Activated CD8-positive, alpha-beta T cell treated with anti-CD3 and anti-CD28 coated beads for 36 hours (primary cell): ENCODE measurements at regions of chr1 and their contacts with region 1.

Region 1: GRCh38 chr1:3796215-3797061 is at the start of gene LRRC47:
- DNase-seq: peak; percentile 96
- ATAC-seq: peak; percentile 99
- H3K4me3 Mint-ChIP-seq: peak within 1 kb of the TSS; percentile 82
- H3K27ac Mint-ChIP-seq: peak within 1 kb of the TSS; percentile 95
- H3K4me1 Mint-ChIP-seq: peaks cover 43% of the 10 kb centered on the region
- H3K27me3 Mint-ChIP-seq: peaks cover 6% of the 10 kb centered on the region
- CTCF ChIP-seq: no peak
- total RNA-seq, gene LRRC47: 32.6 to 33.1 TPM

Region 2: GRCh38 chr1:3384407-3384806 is 412.0 kb before region 1 on chr1:
- CTCF ChIA-PET with region 1: no interaction called
- POLR2A ChIA-PET with region 1: no interaction called
- intact Hi-C with region 1: no loop called
- DNase-seq: no peak
- ATAC-seq: no peak
- H3K4me3 Mint-ChIP-seq: no peak overlapping the region
- H3K27ac Mint-ChIP-seq: no peak overlapping the region
- H3K4me1 Mint-ChIP-seq: no peaks in the 10 kb centered on the region
- H3K27me3 Mint-ChIP-seq: peaks cover 1% of the 10 kb centered on the region
- CTCF ChIP-seq: no peak

Region 3: GRCh38 chr1:3762151-3762872 is 34.1 kb before region 1 on chr1:
- CTCF ChIA-PET with region 1: no interaction called
- POLR2A ChIA-PET with region 1: no interaction called
- intact Hi-C with region 1: no loop called
- DNase-seq: no peak
- ATAC-seq: no peak
- H3K4me3 Mint-ChIP-seq: no peak overlapping the region
- H3K27ac Mint-ChIP-seq: no peak overlapping the region
- H3K4me1 Mint-ChIP-seq: no peaks in the 10 kb centered on the region
- H3K27me3 Mint-ChIP-seq: peaks cover 16% of the 10 kb centered on the region
- CTCF ChIP-seq: no peak

Region 4: DNA sequence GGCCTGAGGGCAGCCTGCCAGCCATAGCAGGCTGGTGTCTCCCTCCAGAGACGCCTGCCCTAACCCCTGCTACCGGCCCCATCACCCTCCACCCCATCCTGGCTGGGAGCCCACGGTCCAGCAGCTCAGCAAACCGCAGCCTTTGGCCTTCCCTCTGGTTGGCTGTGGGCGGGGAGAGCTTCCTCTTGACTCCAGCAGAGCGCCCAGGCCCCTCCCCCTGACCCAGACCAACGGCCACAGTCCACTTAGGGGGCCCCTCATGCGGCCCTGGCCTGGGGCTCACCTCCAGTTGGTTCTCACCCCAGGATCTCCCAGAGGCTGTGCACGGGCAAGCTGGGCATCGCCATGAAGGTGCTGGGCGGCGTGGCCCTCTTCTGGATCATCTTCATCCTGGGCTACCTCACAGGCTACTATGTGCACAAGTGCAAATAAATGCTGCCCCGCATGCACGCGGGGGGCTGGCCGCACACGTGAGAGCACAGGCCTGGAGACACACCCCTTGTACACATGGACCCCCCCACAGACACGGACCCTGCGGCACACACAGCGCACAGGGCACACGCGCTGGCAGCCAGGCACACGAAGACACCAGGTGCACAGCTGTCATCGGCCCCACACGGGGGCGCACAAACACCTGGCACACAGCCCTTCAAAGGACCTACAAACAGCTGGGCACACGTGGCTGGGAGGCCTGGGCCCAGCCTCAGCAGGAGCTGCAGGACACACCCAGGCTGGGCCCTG is 20.8 kb before region 1 on chr1:
- CTCF ChIA-PET with region 1: interaction called, 12 read pairs
- POLR2A ChIA-PET with region 1: interaction called, 12 read pairs
- intact Hi-C with region 1: no loop called
- DNase-seq: peak; percentile 74
- ATAC-seq: peak; percentile 36
- H3K4me3 Mint-ChIP-seq: no peak overlapping the region
- H3K27ac Mint-ChIP-seq: no peak overlapping the region
- H3K4me1 Mint-ChIP-seq: peaks cover 9% of the 10 kb centered on the region
- H3K27me3 Mint-ChIP-seq: no peaks in the 10 kb centered on the region
- CTCF ChIP-seq: peak; percentile 73

Region 5: DNA sequence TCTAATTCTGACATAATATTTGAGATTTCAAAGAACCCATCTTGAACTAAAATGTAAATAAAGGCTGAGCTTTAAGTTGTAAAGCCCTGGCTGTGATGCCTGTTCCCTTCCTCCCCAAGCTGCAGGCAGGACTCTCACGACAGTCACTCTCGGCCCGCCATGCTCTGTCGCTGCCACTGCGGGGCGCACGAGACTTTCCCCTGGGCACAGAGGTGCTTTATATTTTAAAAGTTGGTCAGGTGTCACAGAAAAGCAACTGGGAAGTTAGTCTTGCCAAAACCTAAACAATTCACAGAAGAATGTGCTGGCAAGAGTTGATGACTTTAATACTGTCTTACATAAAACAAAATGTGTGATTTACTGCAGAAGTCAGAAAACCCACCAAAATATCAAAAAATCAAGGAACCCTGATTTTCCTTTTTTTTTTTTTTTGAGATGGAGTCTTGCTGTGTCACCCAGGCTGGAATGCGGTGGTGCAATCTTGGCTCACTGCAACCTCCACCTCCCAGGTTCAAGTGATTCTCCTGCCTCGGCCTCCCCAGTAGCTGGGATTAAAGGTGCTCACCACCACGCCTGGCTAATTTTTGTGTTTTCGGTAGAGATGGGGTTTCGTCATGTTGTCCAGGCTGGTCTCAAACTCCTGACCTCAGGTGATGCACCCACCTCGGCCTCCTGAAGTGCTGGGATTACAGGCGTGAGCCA is 10.8 kb before region 1 on chr1:
- CTCF ChIA-PET with region 1: interaction called, 6 read pairs
- POLR2A ChIA-PET with region 1: interaction called, 19 read pairs
- intact Hi-C with region 1: no loop called
- DNase-seq: no peak
- ATAC-seq: no peak
- H3K4me3 Mint-ChIP-seq: no peak overlapping the region
- H3K27ac Mint-ChIP-seq: no peak overlapping the region
- H3K4me1 Mint-ChIP-seq: peaks cover 14% of the 10 kb centered on the region
- H3K27me3 Mint-ChIP-seq: no peaks in the 10 kb centered on the region
- CTCF ChIP-seq: no peak